Colonic mucosa (tissue), 4 donors: ENCODE measurements at regions of chr22 and their contacts with region 1.

Region 1: GRCh38 chr22:26330966-26331625 is 98.0 kb upstream of the ASPHD2 start:
- DNase-seq: peak; percentile 75
- H3K4me3 ChIP-seq: no peak overlapping the region
- H3K27ac ChIP-seq: no peak overlapping the region
- H3K4me1 ChIP-seq: no peaks in the 10 kb centered on the region
- H3K27me3 ChIP-seq: no peaks in the 10 kb centered on the region
- CTCF ChIP-seq: peak; percentile 87

Region 2: DNA sequence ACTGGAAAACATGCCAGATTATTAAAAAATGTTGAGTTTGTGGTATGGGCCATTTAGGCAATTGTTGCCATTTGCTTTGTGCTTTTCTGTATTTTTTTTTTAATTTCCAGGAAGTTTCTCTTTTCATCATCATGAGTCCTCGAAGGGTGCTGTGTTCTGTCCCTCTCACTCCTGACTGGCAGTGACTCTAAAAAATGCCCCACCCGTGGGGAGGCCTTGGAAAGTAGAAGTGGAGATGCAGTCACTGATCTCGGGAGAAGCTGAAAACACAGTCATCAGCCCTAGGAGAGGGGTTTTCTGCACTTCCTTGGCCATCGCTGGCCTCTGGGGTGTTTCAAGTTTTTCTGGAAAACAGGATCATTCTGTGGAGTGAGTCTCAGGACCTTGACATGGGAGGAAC is 865.1 kb before region 1 on chr22:
- intact Hi-C with region 1: loop called (anchors 10 kb)
- DNase-seq: no peak
- H3K4me3 ChIP-seq: no peak overlapping the region
- H3K27ac ChIP-seq: no peak overlapping the region
- H3K4me1 ChIP-seq: no peaks in the 10 kb centered on the region
- H3K27me3 ChIP-seq: no peaks in the 10 kb centered on the region
- CTCF ChIP-seq: no peak

Region 3: DNA sequence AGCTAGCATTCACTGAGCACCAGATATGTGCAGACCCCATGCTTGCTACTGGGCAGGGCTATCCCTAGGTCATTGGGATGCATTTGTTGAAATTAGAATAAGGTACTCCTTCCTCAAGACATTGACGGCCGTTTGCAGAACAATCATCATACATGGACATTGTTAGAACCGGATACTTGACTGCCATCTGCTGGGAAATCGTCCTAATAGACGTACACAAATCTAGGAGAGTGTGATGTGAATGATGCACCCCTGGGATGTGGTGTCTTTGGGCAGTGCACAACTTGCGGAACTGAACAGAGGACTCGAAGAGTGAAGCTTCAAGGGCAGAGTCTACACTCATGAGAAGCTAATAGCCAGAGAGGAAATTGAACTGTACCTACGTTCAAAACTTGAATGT is 553.2 kb before region 1 on chr22:
- intact Hi-C with region 1: loop called (anchors 5 kb)
- DNase-seq: peak; percentile 23
- H3K4me3 ChIP-seq: no peak overlapping the region
- H3K27ac ChIP-seq: no peak overlapping the region
- H3K4me1 ChIP-seq: no peaks in the 10 kb centered on the region
- H3K27me3 ChIP-seq: no peaks in the 10 kb centered on the region
- CTCF ChIP-seq: no peak

Region 4: DNA sequence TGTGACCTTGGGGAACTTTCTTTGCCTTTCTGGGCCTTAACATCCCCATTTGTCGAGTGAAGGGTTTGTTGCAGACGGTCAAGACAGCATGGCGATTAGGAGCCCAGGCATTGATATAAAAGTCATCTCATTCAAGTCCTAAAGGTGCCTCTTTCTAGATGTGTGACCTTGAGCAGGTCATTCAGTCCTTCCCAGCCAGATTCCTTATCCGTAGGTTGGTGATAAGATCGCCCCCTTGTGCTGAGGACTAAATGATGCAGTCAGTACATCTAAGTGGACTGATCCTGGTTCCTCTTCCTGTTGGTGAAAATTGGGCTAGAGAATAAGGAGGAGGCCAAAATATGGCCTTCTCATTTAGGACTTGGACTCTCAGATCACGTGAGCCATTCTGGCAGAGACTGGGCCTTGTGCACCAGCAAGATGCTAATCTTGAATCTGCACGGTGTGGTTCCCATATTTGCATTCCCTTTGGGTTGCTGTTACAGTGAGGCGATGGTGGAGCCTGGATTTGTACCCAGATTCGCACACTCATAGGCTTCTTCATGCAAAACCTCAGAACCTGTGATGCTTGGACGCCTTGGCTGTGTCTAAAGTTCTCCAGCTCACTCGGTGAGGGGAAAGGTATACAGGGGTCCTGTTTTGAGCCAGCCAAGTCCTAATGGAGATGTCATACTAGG is 432.3 kb before region 1 on chr22:
- intact Hi-C with region 1: loop called (anchors 10 kb)
- DNase-seq: no peak
- H3K4me3 ChIP-seq: no peak overlapping the region
- H3K27ac ChIP-seq: no peak overlapping the region
- H3K4me1 ChIP-seq: no peaks in the 10 kb centered on the region
- H3K27me3 ChIP-seq: no peaks in the 10 kb centered on the region
- CTCF ChIP-seq: no peak